ENCODE measurements at regions of chr5 and their contacts with region 1.

Region 1: DNA sequence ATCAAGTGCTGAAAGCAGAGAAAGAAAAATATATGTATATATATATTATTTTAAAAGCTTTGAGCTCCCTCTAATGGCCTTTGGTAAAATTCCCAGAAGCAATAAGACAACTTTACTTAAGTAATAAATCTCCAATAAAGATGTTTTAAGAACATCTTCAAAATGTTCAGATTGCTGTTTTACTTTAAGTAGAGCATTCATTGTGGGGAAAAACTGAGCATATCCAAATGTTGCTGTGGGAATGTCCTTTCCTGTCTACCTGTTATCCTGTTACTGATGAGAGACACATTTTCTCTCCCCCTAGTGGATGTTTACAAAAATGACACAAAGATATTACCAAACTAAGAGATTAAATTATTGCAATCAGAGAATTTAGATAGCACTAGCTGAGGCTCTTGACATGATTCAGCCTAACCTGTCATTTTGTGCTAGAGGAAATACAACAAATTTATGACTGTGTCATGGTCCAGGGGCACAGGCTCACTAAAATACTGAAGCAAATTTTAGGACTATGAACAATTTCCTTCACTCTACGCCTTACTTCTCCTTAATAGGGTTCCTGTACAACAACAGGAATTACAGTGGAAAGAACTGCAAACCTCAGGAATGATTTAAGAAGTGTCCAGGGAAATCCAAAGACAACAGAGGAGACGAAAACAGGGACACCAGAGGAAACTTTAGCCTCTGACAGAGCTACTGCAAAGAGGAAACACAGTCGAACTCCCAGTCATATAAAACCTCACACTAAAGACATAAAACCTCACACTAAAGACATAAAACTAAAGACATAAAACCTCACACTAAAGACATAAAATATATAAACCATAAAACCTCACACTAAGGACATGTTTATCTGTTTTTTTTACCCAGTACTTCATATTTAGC is 24.3 kb upstream of the PRRC1 start:
- DNase-seq: no peak
- H3K4me3 ChIP-seq: peak overlapping the region in 1 of 59 donors; percentile 16
- H3K27ac ChIP-seq: no peak overlapping the region
- H3K27me3 ChIP-seq: peaks cover 0 to 6% (median 0%) of the 10 kb centered on the region in 45 donors
- CTCF ChIP-seq: peak; percentile 66 to 99 (median 92)

Region 2: DNA sequence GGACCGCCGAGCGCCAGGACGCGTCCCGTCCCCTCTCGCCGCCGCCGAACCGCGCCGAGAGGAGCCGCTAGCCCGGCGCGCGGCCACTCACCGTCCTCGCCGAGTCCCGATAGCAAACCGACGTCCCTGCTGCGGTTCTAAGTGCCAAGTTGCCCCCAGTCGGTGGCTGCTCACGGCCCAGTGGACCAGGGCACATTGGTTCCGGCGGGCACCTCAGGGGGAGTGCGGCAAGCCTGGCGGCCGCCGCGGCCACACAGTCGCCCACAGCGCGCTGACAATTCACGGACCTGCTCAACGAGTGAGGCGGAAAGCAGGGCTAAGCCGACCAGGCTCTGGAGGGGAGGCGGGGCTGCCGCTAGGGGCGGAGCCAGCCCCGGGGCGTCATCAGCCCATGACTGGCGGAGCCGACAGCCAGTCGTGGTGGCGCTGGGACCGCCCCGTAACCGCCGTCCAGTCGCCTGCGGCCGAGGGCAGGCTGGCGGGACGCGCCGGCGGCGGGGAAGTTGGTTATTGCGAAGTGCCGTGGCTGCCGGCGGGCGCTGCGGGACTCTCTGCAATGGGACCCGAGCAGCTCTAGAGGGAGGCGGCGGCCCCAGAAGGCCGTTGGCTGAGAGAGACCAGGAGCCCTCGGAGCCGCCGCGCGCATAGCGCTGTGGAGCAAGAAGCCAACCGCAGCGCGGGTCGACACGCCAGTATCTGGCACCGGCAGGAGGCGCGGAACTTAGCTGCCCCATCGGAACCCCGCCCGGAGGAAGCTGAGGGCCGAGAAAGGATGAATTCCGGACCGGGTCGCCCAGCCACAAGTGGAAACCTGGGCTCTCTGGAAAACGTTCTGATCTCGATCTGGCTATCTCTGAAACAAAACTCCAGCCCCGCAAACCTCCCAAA is 462.6 kb before region 1 on chr5 and contains the start of gene MARCHF3:
- intact Hi-C with region 1: loop called in 1 of 2 experiments (anchors 10 kb)
- DNase-seq: peak; percentile 83 to 98 (median 92)
- H3K4me3 ChIP-seq: peak within 1 kb of the TSS; percentile 61 to 92 (median 81)
- H3K27ac ChIP-seq: peak within 1 kb of the TSS in 54 of 59 donors; percentile 37 to 93 (median 81)
- H3K27me3 ChIP-seq: peaks cover 0 to 28% (median 3%) of the 10 kb centered on the region in 45 donors
- CTCF ChIP-seq: peak in 54 of 56 donors; percentile 15 to 79 (median 48)
- total RNA-seq, gene MARCHF3: 1.6 to 35.9 (median 7.6) TPM

Region 3: GRCh38 chr5:127046343-127047072 is 446.6 kb before region 1 on chr5:
- intact Hi-C with region 1: no loop called
- DNase-seq: no peak
- H3K4me3 ChIP-seq: no peak overlapping the region
- H3K27ac ChIP-seq: no peak overlapping the region
- H3K27me3 ChIP-seq: peaks cover 0 to 7% (median 0%) of the 10 kb centered on the region in 45 donors
- CTCF ChIP-seq: no peak

Region 4: DNA sequence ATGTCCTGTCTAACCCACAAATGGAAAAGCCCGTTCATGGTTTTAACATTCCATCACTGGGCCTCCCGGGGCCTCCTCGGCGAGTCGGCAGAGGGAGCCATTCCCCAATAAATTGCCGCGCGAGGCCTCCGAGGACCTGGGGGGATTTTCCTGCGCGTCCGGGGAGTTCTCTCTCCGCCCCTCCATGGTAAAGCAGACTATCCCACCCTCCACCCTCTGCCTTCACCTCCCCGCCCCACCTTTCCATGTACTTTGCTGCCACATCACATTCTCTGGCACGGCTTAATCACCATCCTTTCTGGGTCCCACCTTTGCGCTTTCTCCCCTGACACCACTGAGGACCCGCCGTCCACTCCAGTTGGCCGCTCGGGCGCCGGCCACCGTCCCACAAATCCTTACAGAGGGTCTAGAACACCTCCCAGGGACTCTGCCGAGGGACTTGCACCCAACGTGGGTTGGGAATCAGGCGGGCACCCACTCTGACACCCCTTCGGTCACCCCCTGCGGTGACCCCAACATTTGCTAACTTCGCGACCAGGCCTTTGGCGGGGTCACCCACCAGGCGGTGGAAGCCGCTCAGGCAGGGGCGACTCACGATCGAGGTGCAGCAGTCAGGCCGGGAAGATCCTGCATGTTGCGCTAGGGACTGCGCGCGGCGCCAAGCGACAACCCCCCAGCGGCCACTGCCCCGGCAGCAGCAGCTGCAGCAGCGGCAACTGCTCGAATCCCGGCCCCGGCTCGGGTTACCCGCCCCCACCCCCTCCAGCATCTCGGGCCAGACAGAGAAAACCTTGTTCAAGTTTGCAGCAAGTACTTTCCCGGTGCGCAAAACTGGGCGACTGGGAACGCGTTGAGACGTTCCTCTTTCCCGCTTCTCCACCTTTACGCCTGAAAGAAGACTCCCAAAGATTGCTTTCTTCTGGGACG is 202.8 kb before region 1 on chr5 and contains the start of gene MEGF10:
- intact Hi-C with region 1: loop called (anchors 1 to 2 kb)
- DNase-seq: peak; percentile 41 to 84 (median 73)
- H3K4me3 ChIP-seq: peak within 1 kb of the TSS; percentile 47 to 86 (median 72)
- H3K27ac ChIP-seq: peak within 1 kb of the TSS; percentile 72 to 99 (median 95)
- H3K27me3 ChIP-seq: peaks cover 0 to 6% (median 0%) of the 10 kb centered on the region in 45 donors
- CTCF ChIP-seq: peak; percentile 51 to 88 (median 79)
- total RNA-seq, gene MEGF10: 22.4 to 157 (median 67.0) TPM

Region 5: GRCh38 chr5:127619908-127620479 is 126.9 kb after region 1 on chr5:
- intact Hi-C with region 1: no loop called
- DNase-seq: no peak
- H3K4me3 ChIP-seq: no peak overlapping the region
- H3K27ac ChIP-seq: no peak overlapping the region
- H3K27me3 ChIP-seq: no peaks in the 10 kb centered on the region
- CTCF ChIP-seq: no peak

Measured in dorsolateral prefrontal cortex (tissue), 120 donors.